ENCODE measurements at regions of chr1 and their contacts with region 1.

Region 1: DNA sequence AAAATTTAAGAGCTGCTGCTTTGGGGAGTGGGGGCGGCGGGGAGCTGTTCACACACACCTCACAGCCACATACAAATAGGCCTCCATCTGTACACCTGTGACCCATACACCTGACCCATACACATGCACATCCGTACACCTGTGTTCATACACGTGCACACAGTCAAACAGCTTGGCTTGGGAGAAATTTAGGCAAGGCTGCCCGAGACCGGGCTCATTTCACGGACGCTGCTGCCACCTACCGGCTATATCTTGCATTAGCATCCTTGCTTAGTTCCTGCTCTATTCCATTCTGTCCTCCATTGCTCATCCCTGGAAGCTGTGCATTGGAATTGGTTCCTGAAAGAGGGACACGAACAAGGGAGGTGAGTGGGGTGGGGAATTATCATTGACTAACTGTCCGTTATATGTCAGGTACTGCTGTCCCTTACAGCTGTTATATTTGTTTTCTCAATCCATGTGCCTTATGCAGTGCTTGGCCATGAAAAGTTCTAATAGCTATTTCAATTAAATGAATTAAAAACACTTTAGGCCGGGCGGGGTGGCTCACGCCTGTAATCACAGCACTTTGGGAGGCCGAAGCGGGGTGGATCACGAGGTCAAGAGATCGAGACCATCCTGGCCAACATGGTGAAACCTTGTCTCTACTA is 37.1 kb upstream of the EPB41 start:
- DNase-seq: peak; percentile 61 to 88 (median 72)
- ATAC-seq: peak; percentile 84
- H3K4me3 ChIP-seq: no peak overlapping the region
- H3K4me3 Mint-ChIP-seq: no peak overlapping the region
- H3K27ac ChIP-seq: no peak overlapping the region
- H3K27ac Mint-ChIP-seq: no peak overlapping the region
- H3K4me1 ChIP-seq: peaks cover 11% of the 10 kb centered on the region
- H3K4me1 Mint-ChIP-seq: peaks cover 7% of the 10 kb centered on the region
- H3K27me3 ChIP-seq: peaks cover 0 to 2% of the 10 kb centered on the region in 2 experiments
- H3K27me3 Mint-ChIP-seq: no peaks in the 10 kb centered on the region
- CTCF ChIP-seq: peak; percentile 97

Region 2: DNA sequence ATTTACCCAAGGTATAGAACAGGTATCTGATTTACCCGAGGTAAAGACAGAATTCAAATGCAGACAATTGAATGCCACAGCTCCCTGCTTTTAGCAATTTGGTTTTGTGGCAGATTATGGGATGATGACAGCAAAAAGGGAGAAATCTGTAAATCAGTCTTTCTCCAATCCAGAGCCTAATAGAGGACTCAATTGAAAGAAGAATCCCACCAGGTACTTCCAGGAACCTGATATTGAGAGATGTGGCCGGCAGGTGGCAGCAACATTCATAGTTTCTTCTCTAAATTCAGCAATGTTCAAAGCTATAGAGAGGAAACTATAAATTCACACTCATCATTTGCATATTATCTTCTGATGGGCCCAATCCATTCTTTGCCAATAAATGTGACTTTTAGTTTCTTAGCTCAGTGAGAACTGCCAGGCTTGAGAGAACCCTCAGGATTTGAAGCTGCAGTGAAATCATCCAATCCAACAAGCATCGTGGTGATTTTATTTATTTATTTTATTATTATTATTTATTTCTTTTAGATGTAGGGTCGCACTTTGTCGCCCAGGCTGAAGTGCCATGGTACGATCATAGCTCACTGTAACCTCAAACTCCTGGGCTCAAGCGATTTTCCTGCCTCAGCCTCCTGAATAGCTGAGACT is 517.5 kb before region 1 on chr1:
- CTCF ChIA-PET with region 1: interaction called, 16 read pairs
- POLR2A ChIA-PET with region 1: interaction called, 3 read pairs
- intact Hi-C with region 1: loop called (anchors 1 kb)
- DNase-seq: peak; percentile 54 to 83 (median 68)
- ATAC-seq: peak; percentile 75
- H3K4me3 ChIP-seq: no peak overlapping the region
- H3K4me3 Mint-ChIP-seq: no peak overlapping the region
- H3K27ac ChIP-seq: no peak overlapping the region
- H3K27ac Mint-ChIP-seq: no peak overlapping the region
- H3K4me1 ChIP-seq: no peaks in the 10 kb centered on the region
- H3K4me1 Mint-ChIP-seq: no peaks in the 10 kb centered on the region
- H3K27me3 ChIP-seq: no peaks in the 10 kb centered on the region
- H3K27me3 Mint-ChIP-seq: no peaks in the 10 kb centered on the region
- CTCF ChIP-seq: peak; percentile 85

Region 3: DNA sequence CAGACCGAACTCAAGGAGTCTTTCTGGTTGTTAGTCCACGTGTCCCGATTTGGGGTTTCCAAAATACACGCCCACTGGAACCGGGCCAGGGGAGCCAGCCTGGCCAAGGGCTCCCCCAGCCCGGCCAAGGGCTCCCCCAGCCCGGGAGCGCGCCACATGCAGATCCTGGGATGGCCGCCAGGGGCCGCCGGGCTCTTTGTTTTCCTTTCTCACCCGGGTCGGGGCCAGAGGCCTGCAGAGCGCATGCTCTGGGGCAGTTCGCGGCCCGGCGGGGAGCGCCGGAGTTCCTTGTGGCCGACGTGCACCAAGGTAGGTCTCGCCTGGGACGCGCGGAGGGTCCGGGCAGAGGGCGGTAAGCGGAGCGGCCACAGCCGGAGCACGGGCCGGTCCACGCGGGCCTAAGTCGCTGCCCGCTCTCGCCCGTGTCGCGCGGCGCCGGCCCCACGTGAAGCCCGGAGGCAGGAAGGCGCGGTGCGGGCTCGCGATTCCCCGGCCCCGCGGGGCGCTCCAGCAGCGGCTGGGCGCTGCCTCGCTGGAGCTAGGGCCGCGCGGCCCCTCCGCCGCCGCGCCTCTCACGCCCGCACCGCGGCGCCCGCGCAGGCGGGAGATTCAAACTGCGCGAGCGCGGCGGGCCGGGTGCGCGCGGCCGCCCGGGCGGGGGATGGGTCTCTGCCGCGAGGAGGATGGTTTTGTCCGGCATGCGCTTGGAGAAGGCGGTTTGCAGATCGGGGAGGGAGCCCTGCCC is 359.1 kb before region 1 on chr1:
- CTCF ChIA-PET with region 1: no interaction called
- POLR2A ChIA-PET with region 1: interaction called, 4 read pairs
- intact Hi-C with region 1: loop called (anchors 1 kb)
- DNase-seq: peak; percentile 80 to 93 (median 86)
- ATAC-seq: peak; percentile 90
- H3K4me3 ChIP-seq: peak overlapping the region; percentile 66
- H3K4me3 Mint-ChIP-seq: peak overlapping the region; percentile 91
- H3K27ac ChIP-seq: peak overlapping the region; percentile 23 to 29
- H3K27ac Mint-ChIP-seq: peak overlapping the region; percentile 83
- H3K4me1 ChIP-seq: peaks cover 24% of the 10 kb centered on the region
- H3K4me1 Mint-ChIP-seq: peaks cover 33% of the 10 kb centered on the region
- H3K27me3 ChIP-seq: no peaks in the 10 kb centered on the region
- H3K27me3 Mint-ChIP-seq: no peaks in the 10 kb centered on the region
- CTCF ChIP-seq: peak; percentile 94

Region 4: DNA sequence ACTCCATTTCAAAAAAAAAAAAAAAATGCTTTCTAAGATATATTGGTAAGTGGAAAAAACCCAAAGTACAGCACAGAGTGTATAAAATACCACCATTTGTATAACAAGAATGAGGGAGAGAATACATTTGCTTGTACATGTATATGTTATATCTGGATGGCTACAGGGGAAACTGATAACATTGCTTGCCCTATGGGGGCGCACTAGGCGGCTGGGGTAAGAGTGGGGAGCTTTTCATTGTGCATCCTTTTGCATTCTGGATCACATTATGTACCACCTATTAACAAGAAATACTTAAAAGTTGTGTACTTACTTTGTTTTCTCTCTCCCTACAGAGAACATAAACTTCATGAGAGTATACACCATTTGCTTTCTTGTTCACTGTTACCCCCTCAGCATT is 93.9 kb before region 1 on chr1:
- CTCF ChIA-PET with region 1: interaction called, 40 read pairs
- POLR2A ChIA-PET with region 1: interaction called, 13 read pairs
- intact Hi-C with region 1: loop called (anchors 1 kb)
- DNase-seq: no peak
- ATAC-seq: no peak
- H3K4me3 ChIP-seq: no peak overlapping the region
- H3K4me3 Mint-ChIP-seq: no peak overlapping the region
- H3K27ac ChIP-seq: no peak overlapping the region
- H3K27ac Mint-ChIP-seq: no peak overlapping the region
- H3K4me1 ChIP-seq: peaks cover 5% of the 10 kb centered on the region
- H3K4me1 Mint-ChIP-seq: peaks cover 5% of the 10 kb centered on the region
- H3K27me3 ChIP-seq: no peaks in the 10 kb centered on the region
- H3K27me3 Mint-ChIP-seq: no peaks in the 10 kb centered on the region
- CTCF ChIP-seq: no peak

Measured in CD4-positive, alpha-beta T cell (primary cell).